Ascending aorta (tissue), 2 donors: ENCODE measurements at regions of chr6 and their contacts with region 1.

Region 1: DNA sequence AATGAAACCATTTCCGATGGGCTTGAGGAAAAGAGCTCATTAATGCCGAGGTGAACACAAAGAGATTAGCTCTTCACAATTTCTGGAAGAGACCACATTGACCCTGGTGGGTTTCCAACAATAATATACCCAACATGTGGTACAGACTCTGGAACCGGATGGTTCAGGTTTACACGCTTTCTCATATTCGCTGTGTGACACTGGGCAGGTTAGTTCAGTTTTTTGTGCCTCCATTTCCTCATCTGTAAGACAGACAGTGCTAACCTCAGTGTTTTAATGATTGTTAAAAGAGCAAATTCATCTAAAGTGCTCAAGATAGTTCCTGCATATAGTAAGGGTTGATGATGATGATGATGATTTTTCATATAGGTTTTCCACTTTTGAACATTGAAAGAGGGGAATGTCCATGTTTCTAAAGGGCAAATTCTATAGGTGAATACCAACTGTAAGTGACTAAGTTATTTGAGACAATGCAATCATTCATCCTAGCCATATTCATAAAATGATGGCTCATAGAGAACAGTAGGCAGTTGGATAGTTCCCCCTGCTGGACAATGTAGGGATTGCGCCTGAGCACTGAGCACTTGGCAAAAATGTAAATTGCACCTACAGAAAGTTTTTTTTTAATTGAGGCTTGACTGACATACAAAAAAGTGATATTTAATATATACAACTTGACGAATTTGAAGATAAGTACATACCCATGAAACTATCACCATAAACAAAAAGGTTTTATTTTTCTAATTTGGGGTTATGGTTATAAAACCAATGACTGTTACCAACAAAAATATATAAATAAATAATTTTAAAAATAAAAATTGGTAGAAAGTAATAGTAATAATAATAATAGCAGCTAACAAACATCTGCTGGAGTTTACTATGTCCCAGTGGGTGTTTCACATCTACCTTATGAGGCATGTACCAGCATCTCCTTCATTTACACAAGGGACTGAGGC is 2.1 kb upstream of the PERP start:
- DNase-seq: peak in 1 of 2 donors; percentile 85
- H3K4me3 ChIP-seq: peak overlapping the region in 1 of 2 donors; percentile 18
- H3K27ac ChIP-seq: peak overlapping the region in 1 of 2 donors; percentile 34
- H3K4me1 ChIP-seq: no peaks in the 10 kb centered on the region
- H3K27me3 ChIP-seq: no peaks in the 10 kb centered on the region
- CTCF ChIP-seq: peak; percentile 72 to 97 (median 95)

Region 2: GRCh38 chr6:136306466-136306865 is 1802.9 kb before region 1 on chr6:
- intact Hi-C with region 1: no loop called
- DNase-seq: no peak
- H3K4me3 ChIP-seq: no peak overlapping the region
- H3K27ac ChIP-seq: no peak overlapping the region
- H3K4me1 ChIP-seq: no peaks in the 10 kb centered on the region
- H3K27me3 ChIP-seq: no peaks in the 10 kb centered on the region
- CTCF ChIP-seq: no peak

Region 3: DNA sequence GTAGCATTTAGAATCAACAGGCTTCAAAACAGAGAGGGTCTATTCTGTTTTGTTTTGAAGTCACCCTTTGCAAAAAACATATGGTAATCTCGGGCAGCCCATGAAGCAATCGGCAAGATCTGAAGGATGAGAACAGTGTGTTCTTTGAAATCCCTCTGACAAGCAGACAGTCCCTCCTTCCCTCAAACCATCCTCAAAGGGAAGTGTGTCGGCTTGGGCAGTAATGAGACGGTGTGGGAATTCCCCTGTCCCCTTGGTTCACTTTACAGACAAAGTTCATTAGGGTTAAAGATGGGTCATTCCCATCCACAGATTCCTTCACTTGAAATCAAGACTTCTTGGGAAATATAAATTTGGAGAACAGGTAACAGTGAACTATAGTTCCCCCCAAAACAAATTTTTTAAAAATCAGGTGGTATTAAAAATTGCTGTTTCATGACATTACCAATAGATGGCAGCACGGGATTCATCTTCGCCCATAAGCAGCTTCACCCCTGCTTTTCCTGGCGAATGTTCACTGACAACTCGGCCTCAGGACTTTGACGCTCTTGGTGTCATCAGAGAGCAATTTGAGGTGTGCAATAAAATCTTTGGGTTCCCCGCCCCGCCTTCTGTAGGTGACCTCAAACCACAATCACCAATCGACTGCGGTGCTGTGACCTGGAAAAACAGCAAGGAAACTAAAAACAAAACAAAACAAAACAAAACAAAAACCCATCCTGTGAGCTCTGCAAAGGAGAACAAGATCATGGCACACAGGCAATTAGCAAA is 401.5 kb before region 1 on chr6:
- intact Hi-C with region 1: loop called (anchors 5 kb)
- DNase-seq: peak in 1 of 2 donors; percentile 79
- H3K4me3 ChIP-seq: no peak overlapping the region
- H3K27ac ChIP-seq: no peak overlapping the region
- H3K4me1 ChIP-seq: peaks cover 0 to 3% of the 10 kb centered on the region in 2 donors
- H3K27me3 ChIP-seq: no peaks in the 10 kb centered on the region
- CTCF ChIP-seq: peak; percentile 52 to 73 (median 56)

Region 4: GRCh38 chr6:138001750-138002349 is 107.5 kb before region 1 on chr6:
- intact Hi-C with region 1: loop called (anchors 1 kb)
- DNase-seq: peak in 1 of 2 donors; percentile 69
- H3K4me3 ChIP-seq: no peak overlapping the region
- H3K27ac ChIP-seq: no peak overlapping the region
- H3K4me1 ChIP-seq: no peaks in the 10 kb centered on the region
- H3K27me3 ChIP-seq: no peaks in the 10 kb centered on the region
- CTCF ChIP-seq: peak; percentile 49 to 86 (median 74)

Region 5: DNA sequence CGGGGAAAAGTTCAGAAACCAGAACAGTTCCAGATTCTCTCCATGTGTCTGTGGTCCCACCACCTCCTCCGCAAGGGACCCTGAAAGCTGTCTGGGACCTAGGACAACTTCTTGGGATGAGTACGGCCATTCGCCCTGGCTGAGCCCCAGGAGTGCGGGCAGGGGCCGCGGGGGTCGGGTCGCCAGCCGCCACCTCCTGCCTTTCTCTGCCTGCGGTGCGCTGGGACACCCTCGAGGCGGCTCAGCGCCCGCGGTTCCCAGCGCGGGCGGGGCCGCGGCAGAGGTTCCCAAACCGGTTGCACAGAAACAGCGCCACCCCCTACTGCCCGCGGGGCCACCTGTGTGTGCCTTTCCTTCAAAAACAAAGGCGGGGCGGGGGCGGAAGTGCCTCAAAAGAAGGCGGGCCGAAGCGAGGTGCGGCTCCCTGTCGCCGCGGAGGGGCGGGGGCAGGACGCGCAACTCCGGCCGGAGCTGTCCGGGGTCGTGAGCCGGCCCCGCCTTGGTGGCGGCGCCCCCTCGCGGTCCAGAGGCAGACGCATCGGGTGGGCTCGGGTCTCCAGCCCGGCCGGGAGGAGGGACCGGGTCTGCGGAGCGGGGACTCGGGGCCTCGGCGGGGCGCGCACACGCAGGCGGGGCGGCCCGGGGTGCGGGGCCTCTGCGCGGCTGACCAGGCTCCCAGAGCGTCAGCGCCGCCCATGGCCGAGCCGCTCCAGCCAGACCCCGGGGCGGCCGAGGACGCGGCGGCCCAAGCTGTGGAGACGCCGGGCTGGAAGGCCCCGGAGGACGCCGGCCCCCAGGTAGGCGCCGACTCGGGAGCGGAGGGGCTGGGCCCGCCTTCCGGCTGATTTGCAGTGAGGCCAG is 294.7 kb after region 1 on chr6 and contains the start of gene HEBP2:
- intact Hi-C with region 1: loop called (anchors 5 kb)
- DNase-seq: peak; percentile 78 to 96
- H3K4me3 ChIP-seq: peak within 1 kb of the TSS; percentile 68 to 93
- H3K27ac ChIP-seq: peak within 1 kb of the TSS; percentile 91 to 95
- H3K4me1 ChIP-seq: peaks cover 0 to 5% of the 10 kb centered on the region in 2 donors
- H3K27me3 ChIP-seq: no peaks in the 10 kb centered on the region
- CTCF ChIP-seq: peak; percentile 40 to 49 (median 47)
- total RNA-seq, gene HEBP2: 63.2 TPM

Region 6: GRCh38 chr6:138773177-138774091 is 664.1 kb after region 1 on chr6 and contains the start of gene CCDC28A:
- intact Hi-C with region 1: loop called (anchors 5 kb)
- DNase-seq: peak; percentile 81 to 97
- H3K4me3 ChIP-seq: peak within 1 kb of the TSS; percentile 67 to 92
- H3K27ac ChIP-seq: peak within 1 kb of the TSS; percentile 84 to 96
- H3K4me1 ChIP-seq: peaks cover 0 to 17% of the 10 kb centered on the region in 2 donors
- H3K27me3 ChIP-seq: no peaks in the 10 kb centered on the region
- CTCF ChIP-seq: no peak
- total RNA-seq, gene CCDC28A: 0.32 TPM